Activated B cell treated with CpG ODN at 0.5 μM for 24 hours (primary cell): ENCODE measurements at regions of chr12 and their contacts with region 1.

Region 1: GRCh38 chr12:102702447-102703114 is 214.5 kb downstream of the PAH start:
- DNase-seq: no peak
- ATAC-seq: peak; percentile 45
- H3K4me3 Mint-ChIP-seq: no peak overlapping the region
- H3K27ac Mint-ChIP-seq: no peak overlapping the region
- H3K4me1 Mint-ChIP-seq: no peaks in the 10 kb centered on the region
- H3K27me3 Mint-ChIP-seq: peaks cover 11% of the 10 kb centered on the region
- CTCF ChIP-seq: no peak

Region 2: DNA sequence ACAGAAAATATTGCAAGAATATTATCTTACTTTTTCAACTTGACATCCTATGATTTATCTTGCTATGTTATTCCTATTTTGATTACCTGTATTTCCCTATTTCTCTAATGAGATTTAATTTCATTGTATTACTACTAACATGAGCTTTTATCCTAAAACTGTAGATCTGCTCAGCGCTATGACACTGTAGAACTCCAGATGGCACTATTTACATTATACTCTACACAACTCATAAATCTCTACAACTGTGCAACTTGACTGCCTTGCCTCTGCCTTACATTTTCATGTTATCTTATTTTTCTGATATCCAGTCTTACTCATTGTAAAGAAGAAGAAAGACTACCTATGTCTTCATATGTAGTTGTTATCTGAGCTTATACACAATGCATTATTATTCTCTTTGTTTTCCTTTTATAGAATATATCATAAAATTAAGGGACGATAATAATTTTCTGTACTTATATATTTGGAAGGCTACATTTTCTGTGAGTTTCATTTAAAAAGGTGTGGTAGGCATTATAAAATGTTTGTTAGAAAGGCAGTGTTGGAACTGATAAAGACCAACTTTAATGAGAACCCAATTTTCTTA is 606.8 kb before region 1 on chr12:
- CTCF ChIA-PET with region 1: interaction called, 3 read pairs
- POLR2A ChIA-PET with region 1: no interaction called
- intact Hi-C with region 1: loop called (anchors 1 kb)
- DNase-seq: no peak
- ATAC-seq: peak; percentile 49
- H3K4me3 Mint-ChIP-seq: no peak overlapping the region
- H3K27ac Mint-ChIP-seq: no peak overlapping the region
- H3K4me1 Mint-ChIP-seq: no peaks in the 10 kb centered on the region
- H3K27me3 Mint-ChIP-seq: no peaks in the 10 kb centered on the region
- CTCF ChIP-seq: no peak

Region 3: GRCh38 chr12:102169922-102170621 is 532.5 kb before region 1 on chr12:
- CTCF ChIA-PET with region 1: interaction called, 14 read pairs
- POLR2A ChIA-PET with region 1: no interaction called
- intact Hi-C with region 1: loop called (anchors 2 kb)
- DNase-seq: no peak
- ATAC-seq: peak; percentile 54
- H3K4me3 Mint-ChIP-seq: no peak overlapping the region
- H3K27ac Mint-ChIP-seq: no peak overlapping the region
- H3K4me1 Mint-ChIP-seq: no peaks in the 10 kb centered on the region
- H3K27me3 Mint-ChIP-seq: no peaks in the 10 kb centered on the region
- CTCF ChIP-seq: no peak

Region 4: DNA sequence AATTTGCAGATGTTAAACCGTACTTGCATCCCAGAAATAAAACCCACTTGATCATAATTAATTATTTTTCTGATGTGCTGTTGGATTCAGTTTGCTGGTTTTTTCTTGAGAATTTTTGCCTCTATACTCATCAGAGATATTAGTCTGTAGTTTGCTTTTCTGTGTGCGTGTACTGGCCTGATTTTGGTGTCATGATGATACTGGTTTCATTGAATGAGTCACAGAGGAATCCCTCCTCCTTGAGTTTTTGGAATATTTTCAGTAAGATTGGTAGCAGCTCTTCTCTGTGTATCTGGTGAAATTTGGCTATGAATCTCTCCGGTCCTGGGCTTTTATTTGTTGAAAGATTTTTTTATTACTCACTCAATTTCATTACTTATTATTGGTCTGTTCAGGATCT is 404.6 kb before region 1 on chr12:
- CTCF ChIA-PET with region 1: interaction called, 4 read pairs
- POLR2A ChIA-PET with region 1: no interaction called
- intact Hi-C with region 1: loop called (anchors 5 kb)
- DNase-seq: no peak
- ATAC-seq: no peak
- H3K4me3 Mint-ChIP-seq: no peak overlapping the region
- H3K27ac Mint-ChIP-seq: no peak overlapping the region
- H3K4me1 Mint-ChIP-seq: no peaks in the 10 kb centered on the region
- H3K27me3 Mint-ChIP-seq: peaks cover 6% of the 10 kb centered on the region
- CTCF ChIP-seq: no peak

Region 5: GRCh38 chr12:102769319-102769916 is 66.8 kb after region 1 on chr12:
- CTCF ChIA-PET with region 1: interaction called, 4 read pairs
- POLR2A ChIA-PET with region 1: no interaction called
- intact Hi-C with region 1: loop called (anchors 1 kb)
- DNase-seq: no peak
- ATAC-seq: peak; percentile 71
- H3K4me3 Mint-ChIP-seq: no peak overlapping the region
- H3K27ac Mint-ChIP-seq: no peak overlapping the region
- H3K4me1 Mint-ChIP-seq: peaks cover 2% of the 10 kb centered on the region
- H3K27me3 Mint-ChIP-seq: peaks cover 10% of the 10 kb centered on the region
- CTCF ChIP-seq: no peak